CD14-positive monocyte (primary cell): ENCODE measurements at regions of chr20 and their contacts with region 1.

Region 1: DNA sequence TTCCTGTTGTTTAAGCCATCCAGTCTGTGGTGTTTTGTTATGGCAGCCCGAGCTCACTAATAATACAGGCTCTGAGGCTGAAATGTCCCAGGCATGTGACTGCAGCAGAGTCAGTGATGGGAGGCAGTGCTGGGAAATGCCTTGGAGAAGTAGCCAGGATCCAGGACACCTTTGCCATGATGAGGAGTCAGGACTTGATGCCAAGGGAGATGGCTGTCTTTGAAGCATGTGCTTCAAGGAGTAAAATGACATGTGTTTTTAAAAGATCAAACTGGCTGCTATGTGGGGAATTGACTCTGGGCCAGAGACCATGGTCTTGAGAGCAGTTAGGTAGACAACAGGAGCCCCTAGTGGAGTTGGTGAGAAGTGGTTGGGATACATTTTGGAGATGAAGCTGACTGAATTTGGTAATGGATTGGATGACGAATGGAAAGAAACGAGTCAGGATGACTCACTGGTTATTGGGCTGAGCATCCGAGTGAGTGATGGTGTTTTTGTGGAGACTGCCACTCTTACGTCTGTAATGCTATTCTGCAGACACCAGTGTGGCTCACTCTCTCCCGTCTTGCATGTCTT is 322.2 kb downstream of the PLCB1 start:
- DNase-seq: peak; percentile 87 to 94 (median 93)
- H3K4me3 ChIP-seq: no peak overlapping the region
- H3K4me3 Mint-ChIP-seq: peak overlapping the region in 1 of 2 donors; percentile 23
- H3K27ac ChIP-seq: peak overlapping the region in 1 of 2 donors; percentile 62
- H3K27ac Mint-ChIP-seq: peak overlapping the region in 6 of 7 donors; percentile 55 to 92 (median 82)
- H3K4me1 ChIP-seq: peaks cover 34 to 42% of the 10 kb centered on the region in 2 donors
- H3K4me1 Mint-ChIP-seq: peaks cover 48% of the 10 kb centered on the region
- H3K27me3 ChIP-seq: no peaks in the 10 kb centered on the region
- H3K27me3 Mint-ChIP-seq: peaks cover 0 to 5% (median 0%) of the 10 kb centered on the region in 3 donors
- CTCF ChIP-seq: peak; percentile 76

Region 2: DNA sequence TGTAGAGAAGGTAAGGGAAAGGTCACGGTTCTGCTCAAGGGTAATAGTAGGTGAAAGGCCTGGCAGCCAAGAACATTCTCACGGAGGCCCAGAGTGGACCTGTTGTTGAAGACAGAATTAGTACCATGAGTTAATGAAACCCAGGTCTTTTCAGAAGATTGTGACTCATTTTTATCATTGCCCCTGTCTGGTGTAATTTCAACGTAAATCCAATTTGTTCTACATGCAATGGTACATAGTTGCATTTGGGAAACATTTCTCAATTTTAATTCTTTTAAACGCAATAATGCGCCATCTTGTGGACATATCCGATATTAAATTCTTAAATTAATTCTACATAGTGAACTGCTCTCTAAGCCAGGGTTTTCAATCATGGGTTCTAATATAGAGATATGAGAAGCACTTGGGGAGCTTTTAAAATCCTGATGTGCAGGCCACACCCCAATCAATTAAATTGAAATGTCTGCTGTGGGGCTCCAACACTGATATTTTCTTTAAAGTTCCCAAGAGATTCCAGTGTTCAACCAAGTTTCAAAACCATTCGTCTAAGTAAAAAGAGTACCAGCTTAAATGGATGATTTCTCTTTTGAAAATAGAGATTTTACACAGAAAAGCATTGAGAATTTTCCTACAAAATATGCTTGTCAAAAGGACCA is 64.7 kb before region 1 on chr20:
- intact Hi-C with region 1: loop called in 1 of 2 experiments (anchors 10 kb)
- DNase-seq: peak; percentile 28 to 64 (median 53)
- H3K4me3 ChIP-seq: peak overlapping the region in 1 of 3 experiments; percentile 16
- H3K4me3 Mint-ChIP-seq: no peak overlapping the region
- H3K27ac ChIP-seq: peak overlapping the region in 1 of 2 donors; percentile 63
- H3K27ac Mint-ChIP-seq: peak overlapping the region in 5 of 7 donors; percentile 13 to 62 (median 54)
- H3K4me1 ChIP-seq: peaks cover 40 to 61% of the 10 kb centered on the region in 2 donors
- H3K4me1 Mint-ChIP-seq: peaks cover 57% of the 10 kb centered on the region
- H3K27me3 ChIP-seq: no peaks in the 10 kb centered on the region
- H3K27me3 Mint-ChIP-seq: no peaks in the 10 kb centered on the region
- CTCF ChIP-seq: peak; percentile 79

Region 3: DNA sequence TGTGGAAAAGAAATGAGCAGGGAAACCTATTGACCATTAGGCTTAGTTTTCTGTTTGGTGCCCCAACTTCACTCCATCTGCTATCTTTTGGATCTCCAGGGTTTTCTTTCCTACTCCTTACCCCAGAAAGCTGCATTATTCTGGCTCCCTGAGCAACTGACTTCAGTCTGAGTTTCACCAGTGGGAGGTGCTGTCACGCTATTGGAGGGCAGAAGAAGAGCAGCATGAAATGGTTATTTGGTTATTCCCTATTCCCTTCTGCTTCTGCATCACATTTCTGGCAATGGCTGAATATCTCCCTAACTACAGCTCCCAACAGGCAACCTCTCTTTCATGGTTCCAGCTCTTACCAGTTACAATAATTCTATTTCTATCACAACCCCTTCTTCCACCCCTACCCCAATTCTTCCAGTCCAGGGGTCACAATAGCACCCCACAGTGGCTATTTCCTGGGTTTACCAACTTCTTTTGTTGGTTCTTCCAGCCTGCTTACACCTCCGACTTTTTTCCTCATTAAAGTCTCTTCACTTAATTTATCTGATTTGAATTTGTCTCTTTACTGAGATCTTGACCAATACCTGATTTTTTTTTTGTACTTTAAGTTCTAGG is 10.7 kb before region 1 on chr20:
- intact Hi-C with region 1: no loop called
- DNase-seq: no peak
- H3K4me3 ChIP-seq: no peak overlapping the region
- H3K4me3 Mint-ChIP-seq: no peak overlapping the region
- H3K27ac ChIP-seq: no peak overlapping the region
- H3K27ac Mint-ChIP-seq: peak overlapping the region in 2 of 7 donors; percentile 5 to 45
- H3K4me1 ChIP-seq: no peaks in the 10 kb centered on the region
- H3K4me1 Mint-ChIP-seq: peaks cover 8% of the 10 kb centered on the region
- H3K27me3 ChIP-seq: no peaks in the 10 kb centered on the region
- H3K27me3 Mint-ChIP-seq: no peaks in the 10 kb centered on the region
- CTCF ChIP-seq: no peak

Region 4: GRCh38 chr20:8527998-8528723 is 73.9 kb after region 1 on chr20:
- intact Hi-C with region 1: loop called in 1 of 2 experiments (anchors 10 kb)
- DNase-seq: peak; percentile 81 to 93 (median 91)
- H3K4me3 ChIP-seq: no peak overlapping the region
- H3K4me3 Mint-ChIP-seq: no peak overlapping the region
- H3K27ac ChIP-seq: peak overlapping the region in 1 of 2 donors; percentile 65
- H3K27ac Mint-ChIP-seq: peak overlapping the region; percentile 68 to 84 (median 80)
- H3K4me1 ChIP-seq: peaks cover 9 to 18% of the 10 kb centered on the region in 2 donors
- H3K4me1 Mint-ChIP-seq: peaks cover 26% of the 10 kb centered on the region
- H3K27me3 ChIP-seq: no peaks in the 10 kb centered on the region
- H3K27me3 Mint-ChIP-seq: no peaks in the 10 kb centered on the region
- CTCF ChIP-seq: no peak